Activated CD8-positive, alpha-beta T cell treated with anti-CD3 and anti-CD28 coated beads for 36 hours (primary cell): ENCODE measurements at regions of chr20 and their contacts with region 1.

Region 1: GRCh38 chr20:44990425-44990824 is 24.1 kb downstream of the STK4 start:
- DNase-seq: peak; percentile 84
- ATAC-seq: peak; percentile 89
- H3K4me3 Mint-ChIP-seq: peak overlapping the region; percentile 72
- H3K27ac Mint-ChIP-seq: peak overlapping the region; percentile 95
- H3K4me1 Mint-ChIP-seq: peaks cover 76% of the 10 kb centered on the region
- H3K27me3 Mint-ChIP-seq: no peaks in the 10 kb centered on the region
- CTCF ChIP-seq: no peak

Region 2: DNA sequence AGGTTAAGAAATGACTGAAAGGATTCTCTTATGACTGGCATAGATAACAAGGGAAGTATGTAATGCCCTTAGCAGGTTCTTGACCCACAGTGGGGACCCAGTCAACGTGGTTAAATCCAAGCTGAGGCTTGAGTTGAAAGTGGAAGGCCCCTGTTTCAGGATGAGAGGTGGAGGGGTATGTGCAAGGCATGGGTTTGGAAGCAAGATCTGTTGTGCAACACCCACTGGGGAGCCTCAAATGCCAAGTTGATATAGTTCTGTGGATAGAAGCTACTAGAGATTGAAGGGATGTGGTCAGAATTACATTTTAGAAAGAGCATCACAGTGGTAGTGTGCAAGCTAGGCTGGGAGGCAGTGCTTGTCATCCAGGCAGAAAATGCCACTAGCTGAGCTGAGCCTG is 75.5 kb before region 1 on chr20:
- CTCF ChIA-PET with region 1: no interaction called
- POLR2A ChIA-PET with region 1: no interaction called
- intact Hi-C with region 1: no loop called
- DNase-seq: peak; percentile 29
- ATAC-seq: peak; percentile 65
- H3K4me3 Mint-ChIP-seq: no peak overlapping the region
- H3K27ac Mint-ChIP-seq: peak overlapping the region; percentile 34
- H3K4me1 Mint-ChIP-seq: peaks cover 28% of the 10 kb centered on the region
- H3K27me3 Mint-ChIP-seq: no peaks in the 10 kb centered on the region
- CTCF ChIP-seq: no peak

Region 3: GRCh38 chr20:44966030-44966961 is 24.1 kb before region 1 on chr20 and contains the start of gene STK4:
- CTCF ChIA-PET with region 1: interaction called, 4 read pairs
- POLR2A ChIA-PET with region 1: interaction called, 15 read pairs
- intact Hi-C with region 1: loop called (anchors 2 kb)
- DNase-seq: peak; percentile 95
- ATAC-seq: peak; percentile 74
- H3K4me3 Mint-ChIP-seq: peak within 1 kb of the TSS; percentile 100
- H3K27ac Mint-ChIP-seq: peak within 1 kb of the TSS; percentile 99
- H3K4me1 Mint-ChIP-seq: peaks cover 59% of the 10 kb centered on the region
- H3K27me3 Mint-ChIP-seq: no peaks in the 10 kb centered on the region
- CTCF ChIP-seq: no peak
- total RNA-seq, gene STK4: 154 to 165 TPM

Region 4: GRCh38 chr20:44979090-44979621 is 11.3 kb before region 1 on chr20:
- CTCF ChIA-PET with region 1: interaction called, 6 read pairs
- POLR2A ChIA-PET with region 1: interaction called, 9 read pairs
- intact Hi-C with region 1: loop called (anchors 1 kb)
- DNase-seq: peak; percentile 86
- ATAC-seq: peak; percentile 82
- H3K4me3 Mint-ChIP-seq: peak overlapping the region; percentile 50
- H3K27ac Mint-ChIP-seq: peak overlapping the region; percentile 96
- H3K4me1 Mint-ChIP-seq: peaks cover 83% of the 10 kb centered on the region
- H3K27me3 Mint-ChIP-seq: no peaks in the 10 kb centered on the region
- CTCF ChIP-seq: no peak

Region 5: GRCh38 chr20:45067558-45067957 is 77.1 kb after region 1 on chr20:
- CTCF ChIA-PET with region 1: no interaction called
- POLR2A ChIA-PET with region 1: no interaction called
- intact Hi-C with region 1: no loop called
- DNase-seq: no peak
- ATAC-seq: no peak
- H3K4me3 Mint-ChIP-seq: no peak overlapping the region
- H3K27ac Mint-ChIP-seq: peak overlapping the region; percentile 53
- H3K4me1 Mint-ChIP-seq: peaks cover 72% of the 10 kb centered on the region
- H3K27me3 Mint-ChIP-seq: no peaks in the 10 kb centered on the region
- CTCF ChIP-seq: no peak